Endothelial cell of umbilical vein (primary cell): ENCODE measurements at regions of chr3 and their contacts with region 1.

Region 1: DNA sequence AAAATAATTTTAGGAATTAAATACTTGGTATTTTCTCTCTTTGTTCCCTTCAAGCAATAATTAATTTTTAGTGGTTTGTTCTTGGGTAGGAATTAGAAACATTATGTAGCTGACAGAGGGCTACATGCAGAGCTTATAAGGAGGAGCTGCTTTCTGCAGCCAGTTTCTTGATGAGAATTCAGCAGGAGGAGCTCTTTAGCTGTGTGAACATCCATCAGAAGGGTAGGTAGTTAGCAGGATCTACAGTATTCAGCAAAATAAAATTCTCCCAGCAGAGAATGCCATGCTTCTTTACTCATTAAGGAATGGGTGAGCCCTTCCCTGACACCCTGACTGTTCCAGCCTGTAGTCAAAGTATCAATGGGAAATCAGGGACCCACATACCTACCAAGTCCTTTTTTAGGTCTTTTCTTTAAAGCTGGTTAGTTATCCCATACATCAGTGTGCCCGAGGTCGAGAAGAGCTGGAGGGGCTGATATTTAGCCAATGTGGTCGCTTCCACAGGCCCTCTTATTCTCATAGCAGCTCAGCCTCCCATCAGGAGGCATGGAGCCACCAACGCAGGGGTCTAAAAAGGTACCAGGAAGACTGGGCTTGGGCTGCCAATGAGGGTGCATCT is 54.0 kb downstream of the KCNAB1 start:
- DNase-seq: peak; percentile 74
- H3K4me3 ChIP-seq: no peak overlapping the region
- H3K27ac ChIP-seq: no peak overlapping the region
- H3K4me1 ChIP-seq: no peaks in the 10 kb centered on the region
- H3K27me3 ChIP-seq: no peaks in the 10 kb centered on the region
- CTCF ChIP-seq: peak; percentile 32 to 45
- POLR2A ChIP-seq: no peak

Region 2: GRCh38 chr3:156151824-156152428 is 22.4 kb before region 1 on chr3:
- CTCF ChIA-PET with region 1: interaction called, 79 read pairs
- POLR2A ChIA-PET with region 1: no interaction called
- dilution Hi-C with region 1: no loop called
- intact Hi-C with region 1: no loop called
- DNase-seq: peak; percentile 75
- H3K4me3 ChIP-seq: no peak overlapping the region
- H3K27ac ChIP-seq: no peak overlapping the region
- H3K4me1 ChIP-seq: peaks cover 19% of the 10 kb centered on the region
- H3K27me3 ChIP-seq: peaks cover 0 to 1% of the 10 kb centered on the region in 2 experiments
- CTCF ChIP-seq: peak; percentile 77 to 81
- POLR2A ChIP-seq: no peak

Region 3: GRCh38 chr3:156211583-156211982 is 37.2 kb after region 1 on chr3:
- CTCF ChIA-PET with region 1: interaction called, 7 read pairs
- POLR2A ChIA-PET with region 1: no interaction called
- dilution Hi-C with region 1: no loop called
- intact Hi-C with region 1: loop called (anchors 2 kb)
- DNase-seq: peak; percentile 90
- H3K4me3 ChIP-seq: no peak overlapping the region
- H3K27ac ChIP-seq: peak overlapping the region; percentile 49
- H3K4me1 ChIP-seq: peaks cover 28% of the 10 kb centered on the region
- H3K27me3 ChIP-seq: no peaks in the 10 kb centered on the region
- CTCF ChIP-seq: no peak
- POLR2A ChIP-seq: peak; percentile 24

Region 4: GRCh38 chr3:156317457-156318074 is 143.2 kb after region 1 on chr3:
- CTCF ChIA-PET with region 1: interaction called, 18 read pairs
- POLR2A ChIA-PET with region 1: no interaction called
- dilution Hi-C with region 1: no loop called
- intact Hi-C with region 1: no loop called
- DNase-seq: peak; percentile 96
- H3K4me3 ChIP-seq: no peak overlapping the region
- H3K27ac ChIP-seq: peak overlapping the region; percentile 72
- H3K4me1 ChIP-seq: peaks cover 24% of the 10 kb centered on the region
- H3K27me3 ChIP-seq: no peaks in the 10 kb centered on the region
- CTCF ChIP-seq: no peak
- POLR2A ChIP-seq: no peak

Region 5: DNA sequence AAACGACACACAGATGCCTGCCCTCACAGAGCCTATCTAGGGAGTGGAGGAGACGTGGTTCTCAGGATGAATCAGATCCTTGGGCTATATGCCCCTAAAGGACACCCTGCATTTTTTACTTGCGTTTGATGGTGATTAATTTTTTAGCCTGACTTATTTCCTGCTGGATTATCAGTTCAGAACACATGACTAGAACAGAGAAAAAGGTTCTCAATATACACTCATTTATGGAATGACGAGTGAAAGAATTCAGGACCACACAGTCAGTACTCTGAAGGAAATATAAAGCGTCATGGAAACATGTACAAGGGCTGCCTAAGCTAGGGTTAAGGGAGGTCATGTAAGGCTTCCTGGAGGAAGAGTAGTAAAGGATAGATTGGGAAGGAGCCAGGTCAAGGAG is 258.8 kb after region 1 on chr3:
- CTCF ChIA-PET with region 1: interaction called, 22 read pairs
- POLR2A ChIA-PET with region 1: no interaction called
- dilution Hi-C with region 1: no loop called
- intact Hi-C with region 1: no loop called
- DNase-seq: peak; percentile 92
- H3K4me3 ChIP-seq: no peak overlapping the region
- H3K27ac ChIP-seq: peak overlapping the region; percentile 48
- H3K4me1 ChIP-seq: peaks cover 25% of the 10 kb centered on the region
- H3K27me3 ChIP-seq: no peaks in the 10 kb centered on the region
- CTCF ChIP-seq: no peak
- POLR2A ChIP-seq: no peak

Region 6: DNA sequence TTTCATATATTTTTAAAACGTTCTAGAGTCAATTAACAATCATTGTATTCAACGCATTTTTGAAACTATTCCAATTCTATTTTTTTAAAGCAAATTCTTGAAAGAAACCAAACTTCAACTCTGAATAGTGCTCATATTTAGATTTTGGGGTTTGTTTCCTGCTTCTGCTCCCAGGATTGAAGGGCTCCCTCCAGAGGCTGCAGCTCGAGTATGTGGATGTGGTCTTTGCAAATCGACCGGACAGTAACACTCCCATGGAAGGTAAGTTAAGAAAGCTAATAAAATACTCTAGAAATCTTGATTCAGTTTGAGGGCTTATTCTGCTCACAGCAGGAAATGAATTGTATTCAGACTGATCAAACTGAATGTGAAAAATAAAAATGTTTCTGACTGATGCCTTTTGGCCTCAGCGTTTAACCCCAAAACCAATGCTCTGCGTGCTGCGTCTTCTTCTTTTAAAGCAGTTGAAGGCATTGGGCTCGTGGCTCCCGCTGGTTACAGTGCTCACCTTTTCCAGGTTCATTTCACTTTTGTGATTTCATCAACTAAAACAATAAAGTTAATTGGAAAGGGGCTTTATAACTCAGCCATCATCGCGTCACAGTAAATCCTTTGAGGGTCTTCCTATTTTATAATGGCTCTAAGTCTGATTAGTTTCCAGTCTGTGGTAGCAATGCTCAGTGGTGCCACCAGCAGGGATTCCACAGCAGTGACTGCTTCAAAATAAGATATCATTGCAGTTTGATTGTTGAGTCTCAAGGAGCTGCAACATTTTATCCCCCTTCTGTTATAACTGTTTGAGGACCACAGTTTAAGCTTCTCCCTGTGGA is 300.4 kb after region 1 on chr3:
- CTCF ChIA-PET with region 1: interaction called, 24 read pairs
- POLR2A ChIA-PET with region 1: no interaction called
- dilution Hi-C with region 1: no loop called
- intact Hi-C with region 1: no loop called
- DNase-seq: no peak
- H3K4me3 ChIP-seq: no peak overlapping the region
- H3K27ac ChIP-seq: no peak overlapping the region
- H3K4me1 ChIP-seq: no peaks in the 10 kb centered on the region
- H3K27me3 ChIP-seq: no peaks in the 10 kb centered on the region
- CTCF ChIP-seq: peak; percentile 29 to 43
- POLR2A ChIP-seq: no peak

Region 7: GRCh38 chr3:157136647-157137387 is 962.5 kb after region 1 on chr3:
- CTCF ChIA-PET with region 1: interaction called, 23 read pairs
- POLR2A ChIA-PET with region 1: no interaction called
- dilution Hi-C with region 1: no loop called
- intact Hi-C with region 1: no loop called
- DNase-seq: no peak
- H3K4me3 ChIP-seq: no peak overlapping the region
- H3K27ac ChIP-seq: no peak overlapping the region
- H3K4me1 ChIP-seq: peaks cover 6% of the 10 kb centered on the region
- H3K27me3 ChIP-seq: no peaks in the 10 kb centered on the region
- CTCF ChIP-seq: no peak
- POLR2A ChIP-seq: no peak